Adrenal gland (tissue), 19 donors: ENCODE measurements at regions of chr11 and their contacts with region 1.

Region 1: DNA sequence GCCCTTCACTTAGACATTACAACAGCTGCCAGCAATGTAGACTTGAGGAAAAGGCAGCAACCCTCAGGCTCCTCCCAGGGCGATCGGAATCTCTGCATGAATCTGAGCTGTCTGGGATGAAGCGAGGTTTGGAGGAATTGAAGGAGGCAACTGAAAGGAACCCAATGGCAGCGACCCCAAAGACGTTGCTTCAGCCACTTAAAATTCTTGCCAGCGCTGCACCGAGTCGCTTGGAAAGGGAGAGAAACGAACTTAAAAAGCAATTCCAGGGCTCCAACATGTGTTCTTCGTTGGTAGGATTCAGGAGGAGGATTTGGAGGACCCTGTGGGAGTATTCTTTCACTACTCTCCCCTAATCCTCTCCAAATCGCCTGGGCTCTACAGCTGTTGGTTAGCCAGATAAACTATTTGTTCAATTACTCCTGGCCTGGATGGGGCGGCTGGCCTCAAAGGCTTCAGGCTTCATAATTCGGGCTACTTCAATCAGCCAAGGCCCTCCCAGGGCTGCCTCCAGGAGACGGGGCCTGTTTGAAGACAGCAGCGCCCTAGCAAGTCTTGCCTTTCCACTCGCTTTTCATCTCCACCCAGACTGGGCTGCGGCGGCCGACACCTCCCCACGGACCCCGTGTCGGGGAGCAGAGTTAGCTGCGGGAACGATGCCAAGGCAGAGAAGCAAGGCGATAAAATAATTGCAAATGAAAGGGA is 72.4 kb upstream of the TMEM45B start:
- DNase-seq: peak in 1 of 7 donors; percentile 39
- H3K4me3 ChIP-seq: no peak overlapping the region
- H3K27ac ChIP-seq: no peak overlapping the region
- H3K4me1 ChIP-seq: no peaks in the 10 kb centered on the region
- H3K27me3 ChIP-seq: peaks cover under 1% of the 10 kb centered on the region
- CTCF ChIP-seq: no peak
- POLR2A ChIP-seq: no peak

Region 2: GRCh38 chr11:129364143-129364654 is 379.1 kb before region 1 on chr11:
- intact Hi-C with region 1: loop called in 1 of 2 experiments (anchors 5 kb)
- DNase-seq: peak; percentile 79 to 89 (median 87)
- H3K4me3 ChIP-seq: no peak overlapping the region
- H3K27ac ChIP-seq: no peak overlapping the region
- H3K4me1 ChIP-seq: no peaks in the 10 kb centered on the region
- H3K27me3 ChIP-seq: peaks cover 36% of the 10 kb centered on the region
- CTCF ChIP-seq: peak; percentile 94 to 98 (median 96)
- POLR2A ChIP-seq: no peak

Region 3: DNA sequence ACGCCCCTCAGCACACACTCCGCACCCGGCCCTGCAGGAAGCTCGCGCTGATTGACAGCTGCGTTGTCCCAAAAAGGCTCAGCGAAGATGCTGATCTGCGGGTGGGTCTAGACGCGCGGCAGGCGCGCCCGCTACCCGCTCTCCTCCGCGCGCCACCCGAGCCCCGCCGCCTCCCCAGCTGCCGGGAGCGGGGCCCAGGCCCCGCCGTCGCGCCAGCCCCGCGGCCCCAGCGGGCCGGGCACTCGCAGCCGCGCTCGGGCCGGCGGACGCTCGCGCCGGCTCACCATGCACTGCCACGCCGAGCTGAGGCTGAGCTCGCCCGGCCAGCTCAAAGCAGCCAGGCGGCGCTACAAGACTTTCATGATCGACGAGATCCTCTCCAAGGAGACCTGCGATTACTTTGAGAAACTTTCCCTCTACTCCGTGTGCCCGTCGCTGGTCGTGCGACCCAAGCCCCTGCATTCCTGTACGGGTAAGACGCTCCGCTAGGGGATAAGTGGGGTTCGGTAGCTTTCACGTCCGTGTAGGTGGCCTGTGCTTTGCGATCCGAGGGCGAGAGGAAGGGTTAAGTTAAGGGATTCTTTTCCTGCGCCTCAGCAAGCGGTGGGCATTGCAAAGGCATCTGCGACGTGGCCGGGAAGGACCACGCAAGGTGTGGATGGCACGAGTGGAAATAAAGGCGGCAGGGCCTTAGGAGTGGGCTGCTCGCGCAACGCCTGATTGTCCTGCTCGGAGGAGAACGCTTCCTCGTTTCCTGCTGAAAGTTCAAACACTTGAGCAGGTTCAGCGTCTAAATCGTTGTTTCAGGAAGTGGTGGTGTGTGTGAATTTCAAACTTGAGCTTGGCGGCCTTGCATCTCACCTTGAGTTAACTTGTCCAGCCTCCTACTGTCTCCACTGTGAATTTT is 367.3 kb before region 1 on chr11 and contains the start of gene BARX2:
- intact Hi-C with region 1: loop called (anchors 5 kb)
- DNase-seq: peak in 6 of 7 donors; percentile 24 to 57 (median 36)
- H3K4me3 ChIP-seq: peak within 1 kb of the TSS in 1 of 4 donors; percentile 32
- H3K27ac ChIP-seq: no peak within 1 kb of the TSS
- H3K4me1 ChIP-seq: peaks cover 19 to 26% of the 10 kb centered on the region in 2 donors
- H3K27me3 ChIP-seq: peaks cover 74% of the 10 kb centered on the region
- CTCF ChIP-seq: peak; percentile 6 to 34 (median 18)
- POLR2A ChIP-seq: no peak
- total RNA-seq, gene BARX2: not detected